ENCODE measurements at regions of chr17 and their contacts with region 1.

Region 1: DNA sequence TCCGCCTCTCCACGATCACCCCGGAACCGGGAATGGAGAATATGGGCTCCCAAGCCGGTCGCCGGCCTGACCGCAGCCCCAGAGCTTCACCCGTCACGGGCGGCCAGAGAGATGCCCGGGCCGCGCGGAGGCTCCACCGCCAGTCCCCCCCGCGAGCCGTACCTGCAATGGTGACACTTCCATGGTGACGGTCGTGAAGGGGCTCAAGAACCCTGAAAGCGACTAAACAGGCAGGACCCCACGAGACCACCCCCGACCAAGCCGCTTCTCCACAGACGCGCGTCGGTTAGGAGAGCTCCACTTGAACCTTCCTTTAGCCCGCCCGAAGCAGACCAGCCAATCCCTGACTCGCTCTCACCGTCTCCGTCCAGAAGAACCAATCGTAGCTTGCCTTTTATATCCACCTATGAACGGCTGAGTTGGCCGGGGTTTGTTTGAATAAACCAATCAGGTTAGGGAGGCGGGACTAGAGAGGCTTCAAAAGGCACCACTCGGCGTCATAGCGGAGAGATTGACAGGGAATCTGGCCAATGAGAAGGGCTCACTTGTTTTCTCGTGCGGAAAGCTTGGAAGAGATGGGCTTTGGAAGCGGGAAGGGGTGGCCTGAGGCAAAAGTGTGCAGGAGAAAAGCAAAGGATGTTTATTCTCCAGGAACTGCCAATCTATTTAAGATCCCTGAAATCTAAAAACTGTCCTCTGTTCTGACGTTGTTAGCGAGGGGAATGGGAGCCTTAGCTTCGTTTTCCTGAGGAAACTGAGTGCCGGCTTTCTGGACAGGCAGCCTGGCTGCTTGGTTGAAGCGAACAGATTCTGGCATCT is at the start of gene TOP2A:
- DNase-seq: peak; percentile 99
- ATAC-seq: peak; percentile 97
- H3K4me3 ChIP-seq: peak within 1 kb of the TSS; percentile 83 to 86
- H3K27ac ChIP-seq: peak within 1 kb of the TSS; percentile 95
- H3K4me1 ChIP-seq: peaks cover 18% of the 10 kb centered on the region
- H3K27me3 ChIP-seq: no peaks in the 10 kb centered on the region
- CTCF ChIP-seq: no peak
- total RNA-seq, gene TOP2A: 230 TPM

Region 2: GRCh38 chr17:39980351-39981206 is 437.2 kb before region 1 on chr17 and contains the start of gene PSMD3:
- CTCF ChIA-PET with region 1: no interaction called
- POLR2A ChIA-PET with region 1: interaction called, 11 read pairs
- in situ Hi-C with region 1: no loop called
- intact Hi-C with region 1: no loop called
- DNase-seq: peak; percentile 98
- ATAC-seq: peak; percentile 96
- H3K4me3 ChIP-seq: peak within 1 kb of the TSS; percentile 90 to 95
- H3K27ac ChIP-seq: peak within 1 kb of the TSS; percentile 89
- H3K4me1 ChIP-seq: peaks cover 11% of the 10 kb centered on the region; the same call in 1 of the 2 replicates
- H3K27me3 ChIP-seq: peaks cover 9% of the 10 kb centered on the region
- CTCF ChIP-seq: peak; percentile 87
- total RNA-seq, gene PSMD3: 175 TPM

Region 3: DNA sequence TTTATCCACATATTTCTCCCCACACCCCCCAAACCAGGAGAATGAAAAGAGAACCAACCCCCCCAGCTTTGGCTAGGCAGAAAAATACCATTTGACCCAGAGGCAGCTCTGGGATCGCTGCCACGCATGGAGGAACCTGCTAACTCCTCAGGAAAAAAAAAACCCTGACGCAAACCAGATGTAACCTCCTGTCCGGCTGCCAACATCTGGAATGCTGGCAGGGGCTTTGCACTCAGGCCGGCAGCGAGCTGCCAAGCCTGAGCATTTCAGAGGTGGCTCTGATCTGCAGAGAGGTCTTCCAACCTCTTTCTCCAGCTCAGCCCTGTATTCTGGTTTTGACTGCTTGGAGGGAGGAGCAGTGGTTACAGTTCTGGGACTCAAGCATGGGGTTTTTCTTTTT is 33.6 kb after region 1 on chr17:
- CTCF ChIA-PET with region 1: interaction called, 11 read pairs
- POLR2A ChIA-PET with region 1: no interaction called
- in situ Hi-C with region 1: no loop called
- intact Hi-C with region 1: no loop called
- DNase-seq: no peak
- ATAC-seq: no peak
- H3K4me3 ChIP-seq: no peak overlapping the region
- H3K27ac ChIP-seq: no peak overlapping the region
- H3K4me1 ChIP-seq: no peaks in the 10 kb centered on the region
- H3K27me3 ChIP-seq: no peaks in the 10 kb centered on the region
- CTCF ChIP-seq: no peak

Region 4: DNA sequence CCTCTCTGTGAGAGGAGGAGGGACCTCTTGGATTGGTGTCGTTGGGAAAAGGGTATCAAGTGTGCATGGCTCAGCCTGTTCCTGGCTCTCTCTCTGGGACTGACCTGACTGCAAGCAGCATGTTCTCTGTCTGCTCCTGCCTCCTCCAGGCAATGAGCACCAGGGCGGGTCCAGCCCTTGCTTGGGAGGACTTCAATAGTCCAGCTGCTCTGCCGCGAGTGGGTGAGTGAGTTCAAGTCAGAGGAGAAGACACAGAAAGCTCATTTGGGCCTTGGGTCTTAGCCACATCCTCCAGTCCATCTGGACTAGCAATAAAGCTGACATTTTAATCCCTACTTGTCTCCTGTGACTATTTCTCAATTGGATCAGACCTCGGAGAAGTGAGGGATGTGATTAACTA is 108.8 kb after region 1 on chr17:
- CTCF ChIA-PET with region 1: no interaction called
- POLR2A ChIA-PET with region 1: no interaction called
- in situ Hi-C with region 1: no loop called
- intact Hi-C with region 1: no loop called
- DNase-seq: no peak
- ATAC-seq: no peak
- H3K4me3 ChIP-seq: no peak overlapping the region
- H3K27ac ChIP-seq: no peak overlapping the region
- H3K4me1 ChIP-seq: no peaks in the 10 kb centered on the region
- H3K27me3 ChIP-seq: peaks cover 8% of the 10 kb centered on the region
- CTCF ChIP-seq: no peak